ENCODE measurements at regions of chr9 and their contacts with region 1.

Region 1: GRCh38 chr9:68949271-68950000 is 64.5 kb downstream of the PRKACG start:
- DNase-seq: peak; percentile 48
- ATAC-seq: peak; percentile 50

Region 2: DNA sequence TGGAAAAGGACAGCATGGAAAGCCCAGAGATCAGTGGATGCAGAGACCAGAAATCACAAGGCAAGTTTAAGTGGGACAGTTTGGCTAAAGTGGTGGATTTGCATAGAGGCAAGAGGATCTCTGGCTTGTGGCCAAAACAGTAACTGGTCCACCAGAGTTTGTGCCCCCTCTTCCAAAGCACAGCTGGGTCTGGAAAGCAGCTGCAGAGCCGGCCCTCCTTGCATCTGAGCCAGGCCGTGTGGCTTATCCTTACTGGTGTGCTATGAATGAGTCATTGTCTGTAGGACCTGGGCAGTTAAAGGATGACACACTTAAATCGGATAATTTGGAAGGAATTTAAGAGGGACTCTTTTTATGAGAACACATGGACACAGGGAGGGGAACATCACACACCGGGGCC is 97.8 kb before region 1 on chr9:
- intact Hi-C with region 1: loop called (anchors 10 kb)
- DNase-seq: no peak
- ATAC-seq: peak; percentile 32

Region 3: GRCh38 chr9:68887232-68887631 is 62.2 kb before region 1 on chr9:
- intact Hi-C with region 1: no loop called
- DNase-seq: no peak
- ATAC-seq: no peak